ENCODE measurements at regions of chr2 and their contacts with region 1.

Region 1: GRCh38 chr2:73343992-73344391 is 41.6 kb upstream of the ALMS1 start:
- DNase-seq: no peak
- ATAC-seq: no peak
- H3K4me3 Mint-ChIP-seq: no peak overlapping the region
- H3K27ac Mint-ChIP-seq: no peak overlapping the region
- H3K4me1 Mint-ChIP-seq: peaks cover 1% of the 10 kb centered on the region
- H3K27me3 Mint-ChIP-seq: peaks cover 8% of the 10 kb centered on the region
- CTCF ChIP-seq: no peak

Region 2: DNA sequence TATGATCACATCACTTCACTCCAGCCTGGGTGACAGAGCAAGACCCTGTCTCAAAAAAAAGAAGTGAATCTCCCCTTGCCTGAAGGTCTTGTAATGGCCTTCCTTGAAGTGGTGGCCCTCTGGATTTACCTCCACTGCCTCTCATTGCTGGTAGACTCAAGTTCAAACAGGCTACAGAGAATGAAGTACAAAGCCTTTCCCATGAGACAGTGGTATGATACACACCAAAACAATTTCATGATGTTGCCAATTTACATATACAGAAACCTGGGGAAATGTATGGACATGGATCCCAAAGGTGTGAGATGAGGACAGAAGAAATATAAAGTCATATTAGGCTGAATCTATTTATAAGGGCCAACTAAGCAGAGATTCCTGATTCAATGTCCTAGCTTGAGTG is 146.4 kb before region 1 on chr2:
- CTCF ChIA-PET with region 1: no interaction called
- POLR2A ChIA-PET with region 1: interaction called, 10 read pairs
- intact Hi-C with region 1: no loop called
- DNase-seq: no peak
- ATAC-seq: no peak
- H3K4me3 Mint-ChIP-seq: no peak overlapping the region
- H3K27ac Mint-ChIP-seq: no peak overlapping the region
- H3K4me1 Mint-ChIP-seq: peaks cover 6% of the 10 kb centered on the region
- H3K27me3 Mint-ChIP-seq: peaks cover 44% of the 10 kb centered on the region
- CTCF ChIP-seq: no peak